Natural killer cell (primary cell): ENCODE measurements at regions of chr14 and their contacts with region 1.

Region 1: GRCh38 chr14:106013879-106014376 is 487.5 kb downstream of the TMEM121 start:
- DNase-seq: peak in 1 of 2 donors; percentile 37
- ATAC-seq: peak; percentile 73 to 80 (median 76)
- H3K4me3 ChIP-seq: no peak overlapping the region
- H3K4me3 Mint-ChIP-seq: no peak overlapping the region
- H3K27ac ChIP-seq: no peak overlapping the region
- H3K27ac Mint-ChIP-seq: peak overlapping the region in 1 of 2 donors; percentile 67
- H3K4me1 ChIP-seq: peaks cover 7% of the 10 kb centered on the region
- H3K4me1 Mint-ChIP-seq: peaks cover 11 to 15% of the 10 kb centered on the region in 2 donors
- H3K27me3 ChIP-seq: peaks cover 8% of the 10 kb centered on the region
- H3K27me3 Mint-ChIP-seq: peaks cover 25 to 37% of the 10 kb centered on the region in 2 donors
- CTCF ChIP-seq: no peak

Region 2: GRCh38 chr14:105974902-105975301 is 39.0 kb before region 1 on chr14:
- intact Hi-C with region 1: loop called (anchors 1 kb)
- DNase-seq: peak; percentile 67 to 87
- ATAC-seq: peak; percentile 70 to 97 (median 90)
- H3K4me3 ChIP-seq: no peak overlapping the region
- H3K4me3 Mint-ChIP-seq: no peak overlapping the region
- H3K27ac ChIP-seq: no peak overlapping the region
- H3K27ac Mint-ChIP-seq: no peak overlapping the region
- H3K4me1 ChIP-seq: peaks cover 5% of the 10 kb centered on the region
- H3K4me1 Mint-ChIP-seq: peaks cover 2 to 7% of the 10 kb centered on the region in 2 donors
- H3K27me3 ChIP-seq: peaks cover 21% of the 10 kb centered on the region
- H3K27me3 Mint-ChIP-seq: peaks cover 61 to 75% of the 10 kb centered on the region in 2 donors
- CTCF ChIP-seq: peak; percentile 61

Region 3: DNA sequence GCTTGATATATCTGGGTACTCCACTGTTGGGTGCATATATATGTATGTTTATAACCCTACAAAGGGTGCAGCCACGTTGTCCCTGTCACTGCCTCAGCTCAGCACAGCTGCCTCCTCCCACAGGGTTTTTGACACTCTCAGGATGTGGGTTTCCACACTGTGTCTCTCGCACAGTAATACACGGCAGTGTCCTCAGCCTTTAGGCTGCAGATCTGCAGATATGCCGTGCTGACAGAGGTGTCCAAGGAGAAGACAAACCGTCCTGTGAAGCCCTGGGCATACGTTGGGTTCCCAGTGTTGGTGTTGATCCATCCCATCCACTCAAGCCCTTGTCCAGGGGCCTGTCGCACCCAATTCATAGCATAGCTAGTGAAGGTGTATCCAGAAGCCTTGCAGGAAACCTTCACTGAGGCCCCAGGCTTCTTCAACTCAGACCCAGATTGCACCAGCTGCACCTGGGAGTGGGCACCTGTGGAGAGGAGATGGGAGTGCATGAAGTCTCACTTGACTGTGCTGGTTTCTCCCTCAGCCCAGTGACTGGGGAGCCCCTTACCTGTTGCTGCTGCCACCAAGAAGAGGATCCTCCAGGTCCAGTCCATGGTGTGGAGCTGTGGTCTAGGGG is 11.2 kb after region 1 on chr14:
- intact Hi-C with region 1: loop called (anchors 1 kb)
- DNase-seq: peak in 1 of 2 donors; percentile 58
- ATAC-seq: peak in 2 of 3 donors; percentile 92 to 97
- H3K4me3 ChIP-seq: no peak overlapping the region
- H3K4me3 Mint-ChIP-seq: peak overlapping the region; percentile 58
- H3K27ac ChIP-seq: no peak overlapping the region
- H3K27ac Mint-ChIP-seq: no peak overlapping the region
- H3K4me1 ChIP-seq: peaks cover 10% of the 10 kb centered on the region
- H3K4me1 Mint-ChIP-seq: peaks cover 10 to 13% of the 10 kb centered on the region in 2 donors
- H3K27me3 ChIP-seq: peaks cover 9% of the 10 kb centered on the region
- H3K27me3 Mint-ChIP-seq: peaks cover 3 to 9% of the 10 kb centered on the region in 2 donors
- CTCF ChIP-seq: no peak

Region 4: DNA sequence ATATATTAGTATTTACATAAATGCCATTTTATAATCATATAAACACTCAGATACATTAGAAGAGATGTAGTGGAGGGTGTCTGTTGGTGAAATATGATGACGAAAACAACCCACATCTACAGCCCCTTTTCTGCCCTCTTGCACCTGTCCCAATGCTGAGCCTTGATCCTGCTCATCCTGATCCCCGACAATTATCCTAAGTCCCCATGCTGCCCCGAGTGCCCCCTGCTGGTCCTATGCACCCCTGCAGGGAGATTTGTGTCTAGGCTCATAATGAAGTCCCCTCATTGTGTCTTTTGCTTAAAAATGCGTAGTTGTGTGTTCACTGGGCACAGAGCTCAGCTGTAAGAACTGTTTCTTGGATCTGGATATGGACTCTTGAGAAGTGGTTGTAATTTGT is 67.0 kb after region 1 on chr14:
- intact Hi-C with region 1: no loop called
- DNase-seq: no peak
- ATAC-seq: no peak
- H3K4me3 ChIP-seq: no peak overlapping the region
- H3K4me3 Mint-ChIP-seq: no peak overlapping the region
- H3K27ac ChIP-seq: no peak overlapping the region
- H3K27ac Mint-ChIP-seq: no peak overlapping the region
- H3K4me1 ChIP-seq: no peaks in the 10 kb centered on the region
- H3K4me1 Mint-ChIP-seq: no peaks in the 10 kb centered on the region
- H3K27me3 ChIP-seq: peaks cover 8% of the 10 kb centered on the region
- H3K27me3 Mint-ChIP-seq: peaks cover 0 to 18% of the 10 kb centered on the region in 2 donors
- CTCF ChIP-seq: no peak

Region 5: DNA sequence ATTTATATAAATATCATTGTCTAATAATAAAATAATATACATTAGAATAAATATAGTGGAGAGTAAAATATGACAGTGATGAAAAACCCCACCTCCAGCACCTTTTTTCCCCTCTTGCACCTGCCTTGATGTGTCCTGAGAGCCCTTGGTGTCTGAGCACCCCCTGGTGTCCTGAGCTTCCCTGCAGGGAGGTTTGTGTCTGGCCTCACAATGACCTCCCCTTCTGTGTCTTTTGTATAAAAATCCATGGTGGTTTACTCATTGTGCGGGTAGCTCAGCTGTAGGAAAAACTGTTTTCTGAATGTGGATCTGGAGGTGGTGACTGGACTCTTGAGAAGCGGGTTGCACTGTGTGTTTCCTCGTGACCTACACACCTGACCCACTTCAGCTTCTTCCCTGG is 149.4 kb after region 1 on chr14:
- intact Hi-C with region 1: no loop called
- DNase-seq: no peak
- ATAC-seq: no peak
- H3K4me3 ChIP-seq: no peak overlapping the region
- H3K4me3 Mint-ChIP-seq: no peak overlapping the region
- H3K27ac ChIP-seq: no peak overlapping the region
- H3K27ac Mint-ChIP-seq: no peak overlapping the region
- H3K4me1 ChIP-seq: peaks cover 5% of the 10 kb centered on the region
- H3K4me1 Mint-ChIP-seq: peaks cover 9 to 10% of the 10 kb centered on the region in 2 donors
- H3K27me3 ChIP-seq: peaks cover 24% of the 10 kb centered on the region
- H3K27me3 Mint-ChIP-seq: peaks cover 56 to 84% of the 10 kb centered on the region in 2 donors
- CTCF ChIP-seq: no peak